Sciatic nerve (tissue), 2 donors: ENCODE measurements at regions of chr14 and their contacts with region 1.

Region 1: GRCh38 chr14:23580948-23581281 is 2.3 kb upstream of the JPH4 start:
- DNase-seq: no peak
- ATAC-seq: no peak

Region 2: GRCh38 chr14:24851837-24852236 is 1270.9 kb after region 1 on chr14:
- intact Hi-C with region 1: loop called (anchors 5 kb)
- DNase-seq: no peak
- ATAC-seq: no peak